CD4-positive, alpha-beta memory T cell (primary cell): ENCODE measurements at regions of chr10 and their contacts with region 1.

Region 1: GRCh38 chr10:79347226-79347893 is at the start of gene PPIF:
- DNase-seq: peak; percentile 85 to 92 (median 89)
- H3K4me3 ChIP-seq: peak within 1 kb of the TSS; percentile 47 to 79
- H3K4me3 Mint-ChIP-seq: peak within 1 kb of the TSS; percentile 77 to 84 (median 82)
- H3K27ac ChIP-seq: peak within 1 kb of the TSS; percentile 72
- H3K27ac Mint-ChIP-seq: peak within 1 kb of the TSS; percentile 83 to 95 (median 92)
- H3K4me1 ChIP-seq: peaks cover 43% of the 10 kb centered on the region
- H3K4me1 Mint-ChIP-seq: peaks cover 13 to 32% (median 23%) of the 10 kb centered on the region in 4 donors
- H3K27me3 ChIP-seq: no peaks in the 10 kb centered on the region
- H3K27me3 Mint-ChIP-seq: no peaks in the 10 kb centered on the region
- total RNA-seq, gene PPIF: 26.3 to 33.7 TPM

Region 2: DNA sequence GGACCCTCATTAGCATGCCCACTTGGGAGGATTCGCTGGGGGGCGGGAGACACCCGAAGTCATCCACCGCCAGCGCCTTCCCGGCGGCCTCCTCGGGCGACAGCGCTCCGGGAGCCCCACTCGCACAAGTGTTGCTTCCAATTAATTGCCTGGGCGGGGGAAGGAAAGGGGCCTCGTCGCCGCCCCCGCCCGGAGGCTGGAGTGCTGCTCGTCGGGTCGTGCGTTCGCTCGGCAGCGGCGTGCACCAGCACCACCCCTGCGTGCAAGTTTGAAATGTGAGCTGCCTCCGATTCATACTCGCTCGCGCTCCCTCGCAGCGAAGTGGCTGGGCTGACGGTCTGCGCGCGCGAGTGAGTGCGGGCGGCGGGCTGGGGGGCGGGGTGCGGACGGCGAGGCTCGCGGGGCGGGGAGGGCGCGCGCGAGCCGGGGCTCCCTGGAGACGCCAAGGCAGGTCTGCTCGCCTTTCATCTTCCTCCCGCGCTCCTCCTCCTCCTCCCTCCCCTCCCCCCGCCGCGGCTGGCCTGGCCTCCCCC is 104.7 kb before region 1 on chr10:
- CTCF ChIA-PET with region 1: no interaction called
- POLR2A ChIA-PET with region 1: interaction called, 3 read pairs
- intact Hi-C with region 1: loop called (anchors 1 kb)
- DNase-seq: peak; percentile 31 to 70 (median 39)
- H3K4me3 ChIP-seq: peak overlapping the region in 1 of 2 donors; percentile 52
- H3K4me3 Mint-ChIP-seq: peak overlapping the region in 7 of 8 donors; percentile 31 to 81 (median 58)
- H3K27ac ChIP-seq: no peak overlapping the region
- H3K27ac Mint-ChIP-seq: peak overlapping the region in 1 of 7 donors; percentile 78
- H3K4me1 ChIP-seq: peaks cover 49% of the 10 kb centered on the region
- H3K4me1 Mint-ChIP-seq: peaks cover 30 to 53% (median 44%) of the 10 kb centered on the region in 4 donors
- H3K27me3 ChIP-seq: no peaks in the 10 kb centered on the region
- H3K27me3 Mint-ChIP-seq: no peaks in the 10 kb centered on the region

Region 3: GRCh38 chr10:79292891-79293746 is 54.2 kb before region 1 on chr10:
- CTCF ChIA-PET with region 1: interaction called, 22 read pairs
- POLR2A ChIA-PET with region 1: no interaction called
- intact Hi-C with region 1: loop called (anchors 1 kb)
- DNase-seq: peak in 2 of 5 donors; percentile 10 to 17
- H3K4me3 ChIP-seq: no peak overlapping the region
- H3K4me3 Mint-ChIP-seq: no peak overlapping the region
- H3K27ac ChIP-seq: no peak overlapping the region
- H3K27ac Mint-ChIP-seq: peak overlapping the region in 1 of 7 donors; percentile 24
- H3K4me1 ChIP-seq: no peaks in the 10 kb centered on the region
- H3K4me1 Mint-ChIP-seq: peaks cover 0 to 10% (median 4%) of the 10 kb centered on the region in 4 donors
- H3K27me3 ChIP-seq: no peaks in the 10 kb centered on the region
- H3K27me3 Mint-ChIP-seq: no peaks in the 10 kb centered on the region

Region 4: GRCh38 chr10:79322616-79323543 is 24.5 kb before region 1 on chr10:
- CTCF ChIA-PET with region 1: interaction called, 57 read pairs
- POLR2A ChIA-PET with region 1: interaction called, 80 read pairs
- intact Hi-C with region 1: loop called (anchors 1 kb)
- DNase-seq: peak; percentile 85 to 94 (median 88)
- H3K4me3 ChIP-seq: peak overlapping the region; percentile 8 to 41
- H3K4me3 Mint-ChIP-seq: peak overlapping the region; percentile 41 to 91 (median 85)
- H3K27ac ChIP-seq: peak overlapping the region; percentile 37
- H3K27ac Mint-ChIP-seq: peak overlapping the region; percentile 92 to 98 (median 96)
- H3K4me1 ChIP-seq: peaks cover 88% of the 10 kb centered on the region
- H3K4me1 Mint-ChIP-seq: peaks cover 58 to 68% (median 65%) of the 10 kb centered on the region in 4 donors
- H3K27me3 ChIP-seq: no peaks in the 10 kb centered on the region
- H3K27me3 Mint-ChIP-seq: no peaks in the 10 kb centered on the region

Region 5: DNA sequence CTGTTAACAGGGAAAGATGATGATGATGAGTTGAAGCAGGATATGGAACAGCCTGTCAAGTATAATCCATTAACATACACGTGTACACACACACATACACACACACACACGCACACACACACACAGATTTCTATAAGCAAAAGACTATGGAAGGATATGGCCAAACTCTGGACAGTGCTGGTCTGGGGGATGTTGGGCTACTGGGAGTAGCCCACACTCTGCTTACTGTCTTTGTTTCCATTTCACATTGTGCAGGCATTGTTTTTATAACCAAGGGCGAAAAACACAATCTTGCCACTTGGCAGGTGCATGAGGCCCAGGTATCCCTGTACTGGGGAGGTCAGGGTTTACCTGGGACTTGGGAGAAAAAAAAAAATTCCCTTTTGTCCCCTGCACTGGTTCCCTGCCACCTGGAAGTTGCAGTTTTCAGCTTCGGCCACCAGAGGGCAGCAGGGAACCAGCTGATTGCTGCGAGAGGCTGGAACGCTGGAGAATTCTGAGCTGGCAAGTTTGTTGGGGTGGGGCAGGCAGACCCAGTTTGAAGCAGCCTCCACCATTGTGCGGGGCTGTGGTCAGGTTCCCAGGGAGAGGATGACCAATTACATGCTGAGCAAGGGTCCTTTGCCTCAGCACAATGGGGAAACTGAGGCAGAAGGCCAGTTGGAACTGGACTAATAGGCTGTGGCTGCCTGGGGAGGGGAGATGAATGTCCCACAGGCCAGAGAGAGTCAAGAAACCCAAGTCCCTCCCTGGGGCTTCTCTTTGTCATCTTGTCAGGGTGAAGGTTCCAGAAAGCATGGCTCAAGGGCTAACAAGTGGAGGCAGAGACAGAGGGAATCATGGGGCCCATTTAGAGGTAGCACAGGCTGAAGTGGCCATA is 27.2 kb after region 1 on chr10:
- CTCF ChIA-PET with region 1: interaction called, 14 read pairs
- POLR2A ChIA-PET with region 1: no interaction called
- intact Hi-C with region 1: no loop called
- DNase-seq: peak; percentile 54 to 74 (median 63)
- H3K4me3 ChIP-seq: no peak overlapping the region
- H3K4me3 Mint-ChIP-seq: no peak overlapping the region
- H3K27ac ChIP-seq: no peak overlapping the region
- H3K27ac Mint-ChIP-seq: peak overlapping the region in 1 of 7 donors; percentile 65
- H3K4me1 ChIP-seq: no peaks in the 10 kb centered on the region
- H3K4me1 Mint-ChIP-seq: peaks cover 0 to 7% (median 3%) of the 10 kb centered on the region in 4 donors
- H3K27me3 ChIP-seq: no peaks in the 10 kb centered on the region
- H3K27me3 Mint-ChIP-seq: no peaks in the 10 kb centered on the region